WTC11 (cell line): ENCODE measurements at regions of chr5 and their contacts with region 1.

Region 1: GRCh38 chr5:151051066-151051930 is 29.5 kb downstream of the TNIP1 start:
- DNase-seq: peak; percentile 89
- ATAC-seq: peak; percentile 88
- H3K4me3 Mint-ChIP-seq: no peak overlapping the region
- H3K27ac Mint-ChIP-seq: no peak overlapping the region
- H3K4me1 Mint-ChIP-seq: no peaks in the 10 kb centered on the region
- H3K27me3 Mint-ChIP-seq: no peaks in the 10 kb centered on the region
- CTCF ChIP-seq: peak; percentile 71

Region 2: DNA sequence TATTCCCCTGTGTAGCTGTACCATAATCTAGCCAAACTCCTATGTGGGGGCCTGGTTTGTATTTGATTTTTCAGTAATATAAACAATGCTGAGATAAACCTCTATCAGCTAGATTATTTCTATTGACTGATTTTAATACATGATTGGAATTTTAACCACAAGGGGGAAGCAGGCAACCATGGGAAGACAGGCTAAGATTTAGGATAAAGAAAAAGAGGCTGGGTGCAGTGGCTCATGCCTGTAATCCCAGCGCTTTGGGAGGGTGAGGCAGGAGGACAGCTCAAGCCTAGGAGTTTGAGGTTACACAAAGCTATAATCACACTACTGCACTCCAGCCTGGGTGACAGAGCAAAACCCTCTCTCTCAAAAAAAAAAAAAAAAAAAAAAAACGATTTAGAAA is 49.0 kb before region 1 on chr5:
- CTCF ChIA-PET with region 1: interaction called, 33 read pairs
- POLR2A ChIA-PET with region 1: interaction called, 4 read pairs
- DNase-seq: no peak
- ATAC-seq: peak; percentile 75
- H3K4me3 Mint-ChIP-seq: no peak overlapping the region
- H3K27ac Mint-ChIP-seq: no peak overlapping the region
- H3K4me1 Mint-ChIP-seq: peaks cover 12% of the 10 kb centered on the region
- H3K27me3 Mint-ChIP-seq: no peaks in the 10 kb centered on the region
- CTCF ChIP-seq: no peak

Region 3: DNA sequence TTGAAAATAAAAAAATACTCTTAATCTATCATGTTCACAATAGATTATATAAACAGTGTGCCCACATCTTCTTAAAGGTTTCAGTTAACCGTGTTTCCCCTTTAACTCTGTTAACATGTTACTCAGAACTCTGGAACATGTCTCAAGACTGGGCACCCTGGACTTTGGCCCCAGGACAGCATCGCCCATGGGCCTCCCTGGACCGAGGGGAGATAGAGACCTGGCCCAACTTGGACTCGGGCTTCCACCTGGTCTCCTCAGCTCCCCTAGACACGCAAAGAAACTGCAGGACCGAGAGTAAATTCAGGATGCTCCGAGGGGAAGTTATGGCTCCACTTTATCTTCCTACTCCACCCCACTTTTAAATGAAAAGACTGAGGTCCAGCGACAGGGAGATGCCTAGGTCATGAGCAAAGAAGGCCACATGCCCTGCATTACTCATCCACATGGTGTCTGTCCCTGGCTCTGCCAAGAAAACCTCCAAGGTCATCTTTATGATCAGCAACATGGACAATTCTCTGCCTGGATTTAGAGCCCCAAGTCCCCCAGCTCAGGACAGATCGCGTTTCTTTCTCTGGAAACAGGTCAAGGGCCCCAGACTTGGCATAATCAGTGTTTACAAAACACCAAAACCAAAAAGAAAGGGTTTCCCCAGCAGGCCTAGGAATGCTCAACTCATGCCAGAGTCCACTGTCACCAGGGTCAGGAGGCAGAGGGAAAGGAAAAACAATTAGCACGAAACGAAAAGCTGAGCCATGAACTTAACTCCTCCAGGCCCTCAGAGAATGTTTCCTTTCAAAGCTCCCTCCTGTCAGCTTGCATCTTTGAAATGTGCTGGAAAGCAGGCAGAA is 13.5 kb before region 1 on chr5:
- CTCF ChIA-PET with region 1: interaction called, 19 read pairs
- POLR2A ChIA-PET with region 1: interaction called, 3 read pairs
- DNase-seq: no peak
- ATAC-seq: no peak
- H3K4me3 Mint-ChIP-seq: no peak overlapping the region
- H3K27ac Mint-ChIP-seq: no peak overlapping the region
- H3K4me1 Mint-ChIP-seq: peaks cover 4% of the 10 kb centered on the region; the same call in 1 of the 2 replicates
- H3K27me3 Mint-ChIP-seq: no peaks in the 10 kb centered on the region
- CTCF ChIP-seq: no peak

Region 4: DNA sequence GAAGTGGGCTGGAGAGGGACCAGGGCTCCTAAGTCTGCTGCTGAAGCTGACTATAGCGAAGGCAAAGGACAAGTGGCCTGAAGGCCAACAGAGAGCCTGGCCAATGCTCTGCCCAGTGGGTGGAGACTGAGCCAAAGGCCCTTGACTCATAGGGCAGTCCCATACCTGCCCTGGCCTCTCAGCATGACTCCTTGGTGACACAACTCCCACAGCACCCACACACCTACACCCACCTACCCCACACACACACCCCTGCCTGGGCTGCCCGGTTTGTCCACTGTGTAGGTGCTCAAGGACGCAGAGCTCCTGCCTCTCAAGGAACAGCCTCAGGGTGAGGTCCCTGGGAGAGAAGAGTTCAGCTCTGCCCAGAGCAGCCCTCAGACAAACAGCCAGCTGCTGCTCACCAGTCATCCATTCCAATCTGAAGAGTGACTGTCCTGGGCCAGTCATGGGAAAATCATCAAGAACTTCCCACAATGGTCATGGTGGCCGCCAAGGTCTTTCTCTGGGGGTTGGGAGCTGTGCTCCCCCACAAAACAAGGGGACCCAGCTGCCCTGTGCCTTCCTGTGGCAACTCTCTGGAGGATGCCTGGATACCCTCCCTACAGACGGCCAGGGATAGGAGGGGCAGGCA is 24.5 kb after region 1 on chr5:
- CTCF ChIA-PET with region 1: interaction called, 40 read pairs
- POLR2A ChIA-PET with region 1: no interaction called
- DNase-seq: no peak
- ATAC-seq: no peak
- H3K4me3 Mint-ChIP-seq: no peak overlapping the region
- H3K27ac Mint-ChIP-seq: 0 out of 2 replicates have a peak overlapping the region, but pooled peaks have one; percentile 41
- H3K4me1 Mint-ChIP-seq: peaks cover 18% of the 10 kb centered on the region
- H3K27me3 Mint-ChIP-seq: no peaks in the 10 kb centered on the region
- CTCF ChIP-seq: no peak

Region 5: GRCh38 chr5:151115274-151115905 is 64.1 kb after region 1 on chr5:
- CTCF ChIA-PET with region 1: interaction called, 305 read pairs
- POLR2A ChIA-PET with region 1: interaction called, 4 read pairs
- DNase-seq: peak; percentile 88
- ATAC-seq: peak; percentile 86
- H3K4me3 Mint-ChIP-seq: no peak overlapping the region
- H3K27ac Mint-ChIP-seq: no peak overlapping the region
- H3K4me1 Mint-ChIP-seq: no peaks in the 10 kb centered on the region
- H3K27me3 Mint-ChIP-seq: no peaks in the 10 kb centered on the region; the same call in 1 of the 2 replicates
- CTCF ChIP-seq: peak; percentile 87

Region 6: DNA sequence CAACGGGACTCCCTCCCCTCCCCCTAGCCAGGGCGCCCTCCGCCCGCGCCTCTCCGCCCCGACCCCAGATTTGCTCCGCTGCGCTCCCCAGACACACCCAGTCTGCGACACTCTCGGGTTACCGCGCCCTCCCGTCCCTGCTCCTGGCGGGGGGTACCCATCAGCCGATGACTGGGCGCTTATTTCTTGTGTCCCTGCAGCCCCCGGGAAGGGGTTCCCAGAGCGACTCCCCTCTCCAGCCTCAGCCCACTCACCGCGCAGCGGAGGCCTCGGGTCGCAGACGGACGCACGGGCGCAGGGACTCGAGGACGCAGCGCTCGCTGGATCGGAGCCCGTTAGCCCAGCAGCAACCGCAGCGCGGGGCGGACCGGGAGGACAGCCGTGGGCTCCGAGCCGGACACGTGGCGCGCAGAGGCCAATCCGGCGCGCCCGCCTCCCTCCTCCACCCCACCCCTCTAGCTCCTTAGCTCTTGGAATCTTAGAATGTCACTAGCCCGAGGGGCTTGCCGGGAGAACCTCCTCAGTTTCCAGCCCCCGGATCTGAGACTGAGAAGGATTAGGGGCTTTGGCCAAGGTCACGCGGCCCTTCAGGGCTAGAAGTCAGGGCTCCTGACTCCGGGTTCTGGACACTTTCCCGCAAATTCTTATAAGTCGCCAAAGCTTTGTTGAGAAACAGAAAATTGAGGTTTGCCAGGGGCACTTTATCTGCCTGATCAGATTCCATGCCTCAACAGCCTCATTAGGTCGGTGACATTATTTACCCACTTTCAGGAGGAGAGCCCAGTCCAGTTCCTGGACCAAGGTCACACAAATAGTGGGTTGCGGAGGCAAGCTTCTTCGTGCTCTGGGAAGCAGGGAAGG is 106.4 kb after region 1 on chr5 and contains the start of gene ANXA6:
- CTCF ChIA-PET with region 1: interaction called, 56 read pairs
- POLR2A ChIA-PET with region 1: no interaction called
- DNase-seq: peak; percentile 76
- ATAC-seq: peak; percentile 94
- H3K4me3 Mint-ChIP-seq: peak within 1 kb of the TSS; percentile 74
- H3K27ac Mint-ChIP-seq: peak within 1 kb of the TSS; percentile 46; the same call in 1 of the 2 replicates
- H3K4me1 Mint-ChIP-seq: peaks cover 24% of the 10 kb centered on the region
- H3K27me3 Mint-ChIP-seq: peaks cover 14% of the 10 kb centered on the region
- CTCF ChIP-seq: no peak
- total RNA-seq, gene ANXA6: 92.8 to 95.4 TPM (median 92.9 TPM) in 3 replicates

Region 7: GRCh38 chr5:151252762-151253604 is 201.7 kb after region 1 on chr5 and contains the start of gene GM2A:
- CTCF ChIA-PET with region 1: interaction called, 10 read pairs
- POLR2A ChIA-PET with region 1: no interaction called
- DNase-seq: peak; percentile 100
- ATAC-seq: peak; percentile 96
- H3K4me3 Mint-ChIP-seq: peak within 1 kb of the TSS; percentile 90
- H3K27ac Mint-ChIP-seq: peak within 1 kb of the TSS; percentile 92
- H3K4me1 Mint-ChIP-seq: peaks cover 35% of the 10 kb centered on the region
- H3K27me3 Mint-ChIP-seq: peaks cover 6% of the 10 kb centered on the region
- CTCF ChIP-seq: no peak
- total RNA-seq, gene GM2A: 33.1 to 36.2 TPM (median 33.2 TPM) in 3 replicates